Activated CD4-positive, alpha-beta T cell treated with anti-CD3 and anti-CD28 coated beads, Interleukin-2, amount 10 ng/mL, durations not matched to agents 24 days and 14 days (primary cell): ENCODE measurements at regions of chr17 and their contacts with region 1.

Region 1: GRCh38 chr17:76304226-76305134 is 3.6 kb downstream of the QRICH2 start:
- DNase-seq: no peak
- H3K4me3 Mint-ChIP-seq: no peak overlapping the region
- H3K27ac Mint-ChIP-seq: no peak overlapping the region
- H3K4me1 Mint-ChIP-seq: peaks cover 2% of the 10 kb centered on the region
- H3K27me3 Mint-ChIP-seq: no peaks in the 10 kb centered on the region

Region 2: GRCh38 chr17:76384222-76384986 is 79.9 kb after region 1 on chr17 and contains the start of gene SPHK1:
- intact Hi-C with region 1: loop called (anchors 5 kb)
- DNase-seq: peak; percentile 95
- H3K4me3 Mint-ChIP-seq: peak within 1 kb of the TSS; percentile 92
- H3K27ac Mint-ChIP-seq: peak within 1 kb of the TSS; percentile 96
- H3K4me1 Mint-ChIP-seq: peaks cover 10% of the 10 kb centered on the region
- H3K27me3 Mint-ChIP-seq: no peaks in the 10 kb centered on the region
- total RNA-seq, gene SPHK1: 26.8 and 27.6 TPM in 2 replicates

Region 3: GRCh38 chr17:76397687-76398487 is 93.4 kb after region 1 on chr17:
- intact Hi-C with region 1: loop called (anchors 1 kb)
- DNase-seq: peak; percentile 96
- H3K4me3 Mint-ChIP-seq: no peak overlapping the region
- H3K27ac Mint-ChIP-seq: no peak overlapping the region
- H3K4me1 Mint-ChIP-seq: no peaks in the 10 kb centered on the region
- H3K27me3 Mint-ChIP-seq: no peaks in the 10 kb centered on the region

Region 4: DNA sequence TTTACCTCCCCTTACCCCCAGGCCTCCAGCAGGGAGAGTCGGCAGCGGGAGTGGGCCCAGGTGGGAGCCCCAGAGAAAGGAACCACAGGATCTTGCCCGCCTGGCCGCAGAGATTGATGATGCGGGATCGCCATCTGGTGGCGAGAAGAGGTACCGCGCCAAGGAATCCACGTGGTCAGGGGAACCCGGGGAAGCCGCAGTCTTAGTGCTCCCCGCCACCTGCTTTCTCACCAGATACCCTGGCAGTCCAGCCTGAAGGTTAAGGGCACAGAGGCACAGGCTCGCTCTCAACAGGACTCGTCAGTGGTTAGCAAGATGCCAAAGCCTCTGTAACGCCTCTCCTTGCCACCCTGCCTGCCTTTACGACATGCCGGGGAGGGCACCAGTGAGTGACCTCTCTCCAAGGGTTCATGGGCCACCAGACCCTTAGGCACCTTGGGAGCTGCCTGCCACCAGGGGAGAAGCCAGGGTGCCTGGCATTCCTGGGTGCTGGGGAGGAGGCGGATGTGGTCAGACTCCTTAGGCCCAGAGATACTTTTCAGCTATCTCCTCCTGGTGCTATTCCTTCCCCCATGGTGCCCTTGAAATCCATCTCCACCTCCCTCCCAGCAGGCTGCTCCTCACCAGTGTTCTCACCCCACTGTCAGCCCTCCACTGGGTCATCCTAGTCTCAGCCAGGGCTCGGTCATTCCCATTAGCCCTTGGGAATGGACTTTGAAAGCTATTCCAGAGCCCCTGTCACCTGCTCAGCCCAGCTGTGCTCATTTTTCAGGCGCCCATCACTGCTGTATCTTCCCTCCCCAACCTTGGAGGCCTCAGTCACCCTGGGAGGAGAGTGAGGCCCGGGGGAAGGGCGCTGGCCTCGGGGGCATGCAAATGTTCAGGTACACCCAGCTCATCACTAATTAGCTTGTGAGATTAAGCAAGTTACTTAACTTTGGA is 202.2 kb after region 1 on chr17:
- intact Hi-C with region 1: loop called (anchors 5 kb)
- DNase-seq: peak; percentile 97
- H3K4me3 Mint-ChIP-seq: no peak overlapping the region
- H3K27ac Mint-ChIP-seq: peak overlapping the region; percentile 70
- H3K4me1 Mint-ChIP-seq: peaks cover 35% of the 10 kb centered on the region
- H3K27me3 Mint-ChIP-seq: peaks cover 2% of the 10 kb centered on the region